ENCODE measurements at regions of chr2 and their contacts with region 1.

Region 1: GRCh38 chr2:61460163-61460562 is 10.7 kb downstream of the USP34 start:
- DNase-seq: no peak
- ATAC-seq: no peak
- H3K4me3 ChIP-seq: no peak overlapping the region
- H3K27ac ChIP-seq: no peak overlapping the region
- H3K4me1 ChIP-seq: peaks cover 8% of the 10 kb centered on the region
- H3K27me3 ChIP-seq: no peaks in the 10 kb centered on the region
- CTCF ChIP-seq: no peak
- EP300 ChIP-seq: no peak
- POLR2A ChIP-seq: no peak
- RAD21 ChIP-seq: no peak

Region 2: GRCh38 chr2:61176755-61177726 is 283.1 kb before region 1 on chr2:
- CTCF ChIA-PET with region 1: no interaction called
- POLR2A ChIA-PET with region 1: no interaction called
- RAD21 ChIA-PET with region 1: no interaction called
- SMC1A ChIA-PET with region 1: no interaction called
- in situ Hi-C with region 1: no loop called
- intact Hi-C with region 1: no loop called
- DNase-seq: peak; percentile 40
- ATAC-seq: peak; percentile 84
- H3K4me3 ChIP-seq: peak overlapping the region; percentile 99
- H3K27ac ChIP-seq: peak overlapping the region; percentile 91
- H3K4me1 ChIP-seq: peaks cover 14% of the 10 kb centered on the region
- H3K27me3 ChIP-seq: no peaks in the 10 kb centered on the region
- CTCF ChIP-seq: peak in 2 of 3 experiments; percentile 7 to 12; a peak in 1 of 6 replicates
- EP300 ChIP-seq: no peak
- POLR2A ChIP-seq: peak; percentile 95
- RAD21 ChIP-seq: no peak

Region 3: GRCh38 chr2:61419129-61419528 is 41.0 kb before region 1 on chr2:
- CTCF ChIA-PET with region 1: interaction called, 3 read pairs
- POLR2A ChIA-PET with region 1: interaction called, 10 read pairs
- RAD21 ChIA-PET with region 1: interaction called, 7 read pairs
- SMC1A ChIA-PET with region 1: interaction called, 19 read pairs
- in situ Hi-C with region 1: no loop called
- intact Hi-C with region 1: no loop called
- DNase-seq: no peak
- ATAC-seq: peak; percentile 90
- H3K4me3 ChIP-seq: no peak overlapping the region
- H3K27ac ChIP-seq: no peak overlapping the region
- H3K4me1 ChIP-seq: peaks cover 26% of the 10 kb centered on the region
- H3K27me3 ChIP-seq: no peaks in the 10 kb centered on the region
- CTCF ChIP-seq: no peak
- EP300 ChIP-seq: no peak
- POLR2A ChIP-seq: no peak
- RAD21 ChIP-seq: no peak

Region 4: DNA sequence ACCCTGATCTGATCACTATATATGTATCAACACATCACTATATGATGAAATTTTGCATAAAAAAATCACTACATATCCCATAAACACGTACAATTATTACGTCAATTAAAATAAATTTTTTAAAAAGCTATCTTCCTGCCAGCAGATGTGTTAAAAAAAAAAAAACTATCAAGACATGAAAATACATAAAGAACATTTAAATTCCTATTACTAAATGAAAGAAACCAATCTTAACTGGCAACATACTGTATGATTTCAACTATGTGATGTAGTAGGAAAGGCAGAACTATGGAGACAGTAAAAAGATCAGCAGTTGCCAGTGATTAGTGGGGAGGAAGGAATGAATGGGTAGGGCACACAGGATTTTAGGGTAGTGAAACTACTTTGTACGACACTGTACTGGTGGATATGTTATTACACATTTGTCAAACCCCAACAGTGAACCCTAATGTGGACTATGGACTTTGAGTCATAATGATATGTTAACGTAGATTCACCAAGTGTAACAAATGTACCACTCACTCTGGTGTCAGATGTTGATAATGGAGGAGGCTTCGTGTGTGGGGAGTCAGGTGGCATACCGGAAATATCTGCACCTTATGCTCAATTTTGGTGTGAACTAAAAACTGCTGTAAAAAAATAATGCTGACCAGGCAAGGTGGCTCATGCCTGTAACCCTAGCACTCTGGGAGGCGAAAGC is 16.7 kb before region 1 on chr2:
- CTCF ChIA-PET with region 1: interaction called, 6 read pairs
- POLR2A ChIA-PET with region 1: interaction called, 5 read pairs
- RAD21 ChIA-PET with region 1: interaction called, 6 read pairs
- SMC1A ChIA-PET with region 1: interaction called, 32 read pairs
- in situ Hi-C with region 1: no loop called
- intact Hi-C with region 1: no loop called
- DNase-seq: peak; percentile 97
- ATAC-seq: peak; percentile 93
- H3K4me3 ChIP-seq: no peak overlapping the region
- H3K27ac ChIP-seq: peak overlapping the region; percentile 76
- H3K4me1 ChIP-seq: peaks cover 46% of the 10 kb centered on the region
- H3K27me3 ChIP-seq: no peaks in the 10 kb centered on the region
- CTCF ChIP-seq: no peak
- EP300 ChIP-seq: peak; percentile 90 to 98; a peak in 3 of 4 replicates
- POLR2A ChIP-seq: no peak
- RAD21 ChIP-seq: no peak

Region 5: DNA sequence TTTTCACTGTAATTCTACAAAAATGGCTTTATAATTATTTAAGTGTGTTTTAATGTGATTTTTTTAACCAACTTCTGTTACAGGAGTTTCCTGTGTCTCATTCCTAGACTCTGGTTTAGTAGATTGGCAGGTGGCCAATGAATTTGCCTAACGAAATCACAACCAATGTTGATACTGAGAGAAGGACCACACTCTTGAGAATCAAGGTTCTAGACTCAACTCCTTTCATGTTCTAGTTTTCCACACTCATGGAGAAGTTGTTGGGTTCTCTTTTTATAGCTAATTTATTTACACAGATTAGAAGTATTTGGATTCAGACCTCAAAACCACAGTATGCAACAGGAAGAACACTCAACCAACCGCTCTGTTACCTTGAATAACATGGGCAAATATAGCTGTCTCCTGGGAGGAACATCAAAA is 33.4 kb after region 1 on chr2:
- CTCF ChIA-PET with region 1: interaction called, 3 read pairs
- POLR2A ChIA-PET with region 1: interaction called, 10 read pairs
- RAD21 ChIA-PET with region 1: no interaction called
- SMC1A ChIA-PET with region 1: interaction called, 3 read pairs
- in situ Hi-C with region 1: no loop called
- intact Hi-C with region 1: no loop called
- DNase-seq: no peak
- ATAC-seq: no peak; the same call in 1 of the 3 replicates
- H3K4me3 ChIP-seq: no peak overlapping the region
- H3K27ac ChIP-seq: no peak overlapping the region; the same call in 1 of the 2 replicates
- H3K4me1 ChIP-seq: no peaks in the 10 kb centered on the region
- H3K27me3 ChIP-seq: no peaks in the 10 kb centered on the region
- CTCF ChIP-seq: no peak
- EP300 ChIP-seq: no peak
- POLR2A ChIP-seq: no peak
- RAD21 ChIP-seq: no peak

Region 6: DNA sequence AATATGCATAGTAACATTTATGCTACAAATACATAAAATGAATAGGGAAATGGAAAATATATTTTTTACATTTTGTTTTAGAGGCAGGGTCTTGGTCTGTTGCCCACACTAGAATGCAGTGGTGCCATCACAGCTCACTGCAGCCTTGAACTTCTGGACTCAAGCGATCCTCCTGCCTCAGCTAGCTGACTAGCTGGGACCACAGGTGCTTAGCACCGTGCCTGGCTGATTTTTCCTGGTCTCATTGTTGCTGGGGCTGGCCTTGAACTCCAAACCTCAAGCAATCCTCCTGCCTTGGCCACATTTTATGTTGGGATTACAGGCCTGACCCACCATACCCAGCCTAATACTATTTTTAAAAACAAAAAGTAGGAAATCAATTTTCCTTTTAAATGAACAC is 44.8 kb after region 1 on chr2:
- CTCF ChIA-PET with region 1: no interaction called
- POLR2A ChIA-PET with region 1: no interaction called
- RAD21 ChIA-PET with region 1: no interaction called
- SMC1A ChIA-PET with region 1: no interaction called
- in situ Hi-C with region 1: no loop called
- intact Hi-C with region 1: no loop called
- DNase-seq: no peak
- ATAC-seq: no peak
- H3K4me3 ChIP-seq: no peak overlapping the region
- H3K27ac ChIP-seq: no peak overlapping the region
- H3K4me1 ChIP-seq: no peaks in the 10 kb centered on the region
- H3K27me3 ChIP-seq: no peaks in the 10 kb centered on the region
- CTCF ChIP-seq: no peak
- EP300 ChIP-seq: no peak
- POLR2A ChIP-seq: no peak; the same call in 1 of the 2 replicates
- RAD21 ChIP-seq: no peak

Region 7: GRCh38 chr2:61649021-61649420 is 188.9 kb after region 1 on chr2:
- CTCF ChIA-PET with region 1: no interaction called
- POLR2A ChIA-PET with region 1: no interaction called
- RAD21 ChIA-PET with region 1: no interaction called
- SMC1A ChIA-PET with region 1: no interaction called
- in situ Hi-C with region 1: no loop called
- intact Hi-C with region 1: no loop called
- DNase-seq: no peak
- ATAC-seq: no peak
- H3K4me3 ChIP-seq: no peak overlapping the region
- H3K27ac ChIP-seq: no peak overlapping the region
- H3K4me1 ChIP-seq: no peaks in the 10 kb centered on the region
- H3K27me3 ChIP-seq: no peaks in the 10 kb centered on the region
- CTCF ChIP-seq: no peak
- EP300 ChIP-seq: no peak
- POLR2A ChIP-seq: no peak
- RAD21 ChIP-seq: no peak

Measured in GM12878 (cell line).